Aorta (tissue), 5 donors: ENCODE measurements at regions of chr9 and their contacts with region 1.

Region 1: DNA sequence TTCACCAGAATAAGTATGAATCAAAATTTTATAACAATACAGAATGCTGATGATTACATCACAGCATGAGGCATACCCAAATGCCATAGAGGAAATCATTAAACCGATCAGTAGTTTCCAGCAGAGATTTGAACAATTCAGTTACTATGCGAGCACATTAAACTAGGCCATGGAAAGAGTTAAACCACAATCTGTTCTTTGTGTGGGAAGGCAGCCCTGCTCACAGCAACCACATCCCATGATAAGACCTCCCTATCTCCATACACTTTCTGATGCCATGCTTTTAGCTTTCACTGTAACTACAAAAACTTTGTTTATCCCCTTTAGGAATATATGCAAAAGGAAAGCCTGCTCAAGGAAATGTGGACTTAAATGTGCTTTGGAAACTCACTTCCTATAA is 4.5 kb downstream of the NFIB start:
- DNase-seq: no peak
- ATAC-seq: no peak
- H3K4me3 ChIP-seq: peak overlapping the region; percentile 28 to 41
- H3K27ac ChIP-seq: peak overlapping the region in 1 of 2 donors; percentile 36
- H3K4me1 ChIP-seq: peaks cover 4% of the 10 kb centered on the region in 2 donors
- H3K27me3 ChIP-seq: no peaks in the 10 kb centered on the region

Region 2: GRCh38 chr9:14251154-14252071 is 58.0 kb before region 1 on chr9:
- intact Hi-C with region 1: loop called (anchors 10 kb)
- DNase-seq: peak; percentile 79 to 86
- ATAC-seq: peak; percentile 74
- H3K4me3 ChIP-seq: no peak overlapping the region
- H3K27ac ChIP-seq: peak overlapping the region in 1 of 2 donors; percentile 96
- H3K4me1 ChIP-seq: peaks cover 3 to 16% of the 10 kb centered on the region in 2 donors
- H3K27me3 ChIP-seq: no peaks in the 10 kb centered on the region